Common myeloid progenitor, CD34-positive (primary cell): ENCODE measurements at regions of chr11 and their contacts with region 1.

Region 1: DNA sequence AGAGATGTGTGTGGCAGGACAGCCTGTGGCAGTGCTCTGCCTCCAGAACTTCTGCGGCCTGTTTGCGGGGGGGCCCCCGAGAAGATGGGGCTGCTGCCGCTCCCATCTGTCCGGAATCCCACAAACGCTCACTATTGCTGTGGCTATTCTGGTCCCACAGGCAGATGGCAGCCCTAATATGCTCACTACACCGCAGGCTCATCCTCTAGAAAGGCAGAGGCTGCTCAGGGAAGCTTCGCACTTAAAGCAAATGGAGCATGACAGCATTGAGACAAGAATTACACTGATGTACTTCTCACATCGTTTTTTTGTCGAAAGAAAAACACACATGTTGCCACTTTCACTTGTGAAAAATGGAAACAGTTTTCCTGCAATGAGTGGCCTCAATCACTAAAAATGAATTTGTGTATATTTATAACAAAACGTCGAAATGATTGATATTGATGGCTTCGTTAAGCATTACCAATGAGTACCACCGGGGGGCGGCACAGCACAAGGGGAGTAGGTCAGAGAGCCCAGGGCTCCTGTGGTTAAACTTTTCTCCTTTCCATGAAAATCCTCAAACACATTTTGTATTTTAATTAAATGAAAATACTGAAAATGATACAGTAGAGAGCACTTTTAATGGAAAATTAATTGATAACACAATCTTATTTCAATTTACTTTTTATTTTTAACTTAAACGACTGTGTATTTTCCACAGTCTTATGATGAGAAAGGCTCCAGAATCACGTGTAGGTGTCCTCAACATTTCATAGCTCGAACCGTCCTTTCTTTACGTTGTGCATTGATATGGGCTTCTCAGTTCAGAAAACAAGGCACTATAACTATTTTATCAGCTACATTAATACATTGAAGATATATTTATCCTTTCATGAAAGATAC is 69.1 kb downstream of the CTTN start:
- DNase-seq: peak; percentile 55 to 71 (median 60)
- H3K4me3 ChIP-seq: no peak overlapping the region
- H3K27ac ChIP-seq: no peak overlapping the region
- H3K4me1 ChIP-seq: peaks cover 8 to 63% (median 43%) of the 10 kb centered on the region in 4 experiments
- H3K27me3 ChIP-seq: peaks cover 0 to 5% (median 0%) of the 10 kb centered on the region in 5 experiments

Region 2: GRCh38 chr11:70240337-70240736 is 227.1 kb before region 1 on chr11:
- CTCF ChIA-PET with region 1: no interaction called
- POLR2A ChIA-PET with region 1: no interaction called
- DNase-seq: no peak
- H3K4me3 ChIP-seq: no peak overlapping the region
- H3K27ac ChIP-seq: no peak overlapping the region
- H3K4me1 ChIP-seq: no peaks in the 10 kb centered on the region
- H3K27me3 ChIP-seq: peaks cover 0 to 15% (median 2%) of the 10 kb centered on the region in 5 experiments

Region 3: DNA sequence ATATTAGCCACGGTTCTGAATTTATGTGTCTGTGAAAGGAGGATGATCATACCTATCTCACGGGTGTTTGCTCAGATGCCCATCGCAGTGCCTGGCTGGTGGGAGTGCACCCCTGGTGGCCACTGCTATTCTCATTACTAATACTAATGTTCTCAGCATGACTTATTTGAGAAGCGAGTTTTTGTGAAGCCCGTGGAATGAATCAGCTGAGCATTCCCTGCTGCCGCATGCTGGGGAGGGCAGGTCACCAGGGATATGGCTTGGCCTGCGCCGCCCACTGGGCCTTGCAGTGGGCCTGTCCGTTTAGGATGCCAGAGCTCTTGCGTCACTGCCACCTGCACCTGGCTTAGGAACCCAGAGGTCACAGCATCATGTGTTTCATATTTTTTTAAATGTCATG is 52.3 kb before region 1 on chr11:
- CTCF ChIA-PET with region 1: no interaction called
- POLR2A ChIA-PET with region 1: no interaction called
- DNase-seq: peak in 1 of 3 donors; percentile 32
- H3K4me3 ChIP-seq: no peak overlapping the region
- H3K27ac ChIP-seq: no peak overlapping the region
- H3K4me1 ChIP-seq: peaks cover 0 to 21% (median 7%) of the 10 kb centered on the region in 4 experiments
- H3K27me3 ChIP-seq: peaks cover 0 to 40% (median 19%) of the 10 kb centered on the region in 5 experiments

Region 4: GRCh38 chr11:70483077-70483861 is 15.8 kb after region 1 on chr11:
- CTCF ChIA-PET with region 1: interaction called, 96 read pairs
- POLR2A ChIA-PET with region 1: interaction called, 3 read pairs
- DNase-seq: peak; percentile 80 to 94 (median 91)
- H3K4me3 ChIP-seq: no peak overlapping the region
- H3K27ac ChIP-seq: no peak overlapping the region
- H3K4me1 ChIP-seq: peaks cover 0 to 20% (median 10%) of the 10 kb centered on the region in 4 experiments
- H3K27me3 ChIP-seq: no peaks in the 10 kb centered on the region

Region 5: GRCh38 chr11:70650075-70650909 is 182.8 kb after region 1 on chr11:
- CTCF ChIA-PET with region 1: no interaction called
- POLR2A ChIA-PET with region 1: no interaction called
- DNase-seq: peak; percentile 70 to 89 (median 88)
- H3K4me3 ChIP-seq: no peak overlapping the region
- H3K27ac ChIP-seq: no peak overlapping the region
- H3K4me1 ChIP-seq: no peaks in the 10 kb centered on the region
- H3K27me3 ChIP-seq: peaks cover 0 to 13% (median 0%) of the 10 kb centered on the region in 5 experiments

Region 6: DNA sequence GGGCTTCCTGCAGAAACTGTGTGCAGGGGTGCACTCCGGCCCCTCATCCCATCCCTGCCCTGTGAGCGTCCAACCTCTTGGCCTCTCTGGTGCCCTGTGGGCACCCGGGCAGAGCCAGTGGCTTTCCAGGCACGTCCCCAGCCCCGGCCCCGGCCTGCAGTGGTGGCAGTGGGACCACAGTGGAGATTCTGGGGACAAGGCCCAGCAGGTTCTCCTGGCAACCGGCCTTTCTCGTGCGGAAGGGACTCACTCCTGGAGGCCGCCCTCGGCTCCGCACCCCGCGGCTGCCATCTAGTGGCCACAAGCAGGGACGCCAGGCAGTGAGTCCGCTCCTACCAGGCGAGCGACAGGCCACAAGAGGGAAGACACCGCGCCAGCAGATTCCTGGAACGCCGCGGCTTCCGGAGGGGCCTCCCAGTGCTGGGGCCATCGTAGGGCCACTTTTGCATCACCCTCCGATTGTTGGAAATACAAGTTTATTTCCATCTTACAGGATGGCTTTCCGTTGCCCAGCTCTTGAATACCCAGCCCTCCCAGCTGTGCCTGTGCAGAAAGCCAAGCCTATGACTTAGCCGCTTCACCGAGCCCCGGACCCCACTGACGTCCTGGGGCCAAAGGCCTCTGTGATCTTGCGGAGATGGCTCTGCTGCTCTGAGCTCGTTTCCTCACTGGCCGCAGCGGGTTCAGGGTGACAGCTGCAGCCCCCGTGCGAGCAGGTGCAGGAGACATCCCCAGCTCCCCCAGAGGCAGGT is 288.1 kb after region 1 on chr11:
- CTCF ChIA-PET with region 1: interaction called, 29 read pairs
- POLR2A ChIA-PET with region 1: no interaction called
- DNase-seq: peak; percentile 56 to 76 (median 75)
- H3K4me3 ChIP-seq: peak overlapping the region in 2 of 7 experiments; percentile 54 to 57
- H3K27ac ChIP-seq: no peak overlapping the region
- H3K4me1 ChIP-seq: peaks cover 0 to 7% (median 5%) of the 10 kb centered on the region in 4 experiments
- H3K27me3 ChIP-seq: peaks cover 0 to 11% (median 4%) of the 10 kb centered on the region in 5 experiments